ENCODE measurements at regions of chr6 and their contacts with region 1.

Region 1: DNA sequence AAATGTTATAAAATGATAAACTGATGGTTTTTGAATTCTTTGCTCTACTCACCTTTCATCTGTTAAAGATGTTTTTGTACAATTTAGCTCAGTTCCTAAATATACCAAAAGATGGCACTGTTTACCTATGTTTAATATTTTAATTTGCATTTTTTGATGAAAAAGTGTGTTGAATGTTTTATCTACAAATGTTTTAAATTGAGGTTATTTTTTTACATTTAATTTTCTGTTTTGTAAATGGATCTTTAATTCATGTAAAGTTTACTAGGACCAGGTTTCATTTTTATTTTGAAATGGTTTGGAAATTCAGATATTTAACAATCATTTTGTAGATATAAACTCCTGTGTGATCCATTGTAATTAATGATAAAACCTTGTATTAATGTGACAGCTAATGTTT is 30.0 kb downstream of the CDKAL1 start:
- DNase-seq: no peak
- H3K4me3 ChIP-seq: no peak overlapping the region
- H3K27ac ChIP-seq: no peak overlapping the region
- H3K4me1 ChIP-seq: no peaks in the 10 kb centered on the region
- H3K27me3 ChIP-seq: no peaks in the 10 kb centered on the region
- CTCF ChIP-seq: peak; percentile 40 to 83 (median 66)
- POLR2A ChIP-seq: no peak

Region 2: GRCh38 chr6:20159781-20160540 is 404.3 kb before region 1 on chr6:
- intact Hi-C with region 1: no loop called
- DNase-seq: no peak
- H3K4me3 ChIP-seq: no peak overlapping the region
- H3K27ac ChIP-seq: no peak overlapping the region
- H3K4me1 ChIP-seq: no peaks in the 10 kb centered on the region
- H3K27me3 ChIP-seq: no peaks in the 10 kb centered on the region
- CTCF ChIP-seq: no peak
- POLR2A ChIP-seq: no peak

Region 3: GRCh38 chr6:21003780-21004541 is 439.7 kb after region 1 on chr6:
- intact Hi-C with region 1: no loop called
- DNase-seq: no peak
- H3K4me3 ChIP-seq: no peak overlapping the region
- H3K27ac ChIP-seq: no peak overlapping the region
- H3K4me1 ChIP-seq: peaks cover 0 to 5% of the 10 kb centered on the region in 2 donors
- H3K27me3 ChIP-seq: no peaks in the 10 kb centered on the region
- CTCF ChIP-seq: no peak
- POLR2A ChIP-seq: no peak

Region 4: DNA sequence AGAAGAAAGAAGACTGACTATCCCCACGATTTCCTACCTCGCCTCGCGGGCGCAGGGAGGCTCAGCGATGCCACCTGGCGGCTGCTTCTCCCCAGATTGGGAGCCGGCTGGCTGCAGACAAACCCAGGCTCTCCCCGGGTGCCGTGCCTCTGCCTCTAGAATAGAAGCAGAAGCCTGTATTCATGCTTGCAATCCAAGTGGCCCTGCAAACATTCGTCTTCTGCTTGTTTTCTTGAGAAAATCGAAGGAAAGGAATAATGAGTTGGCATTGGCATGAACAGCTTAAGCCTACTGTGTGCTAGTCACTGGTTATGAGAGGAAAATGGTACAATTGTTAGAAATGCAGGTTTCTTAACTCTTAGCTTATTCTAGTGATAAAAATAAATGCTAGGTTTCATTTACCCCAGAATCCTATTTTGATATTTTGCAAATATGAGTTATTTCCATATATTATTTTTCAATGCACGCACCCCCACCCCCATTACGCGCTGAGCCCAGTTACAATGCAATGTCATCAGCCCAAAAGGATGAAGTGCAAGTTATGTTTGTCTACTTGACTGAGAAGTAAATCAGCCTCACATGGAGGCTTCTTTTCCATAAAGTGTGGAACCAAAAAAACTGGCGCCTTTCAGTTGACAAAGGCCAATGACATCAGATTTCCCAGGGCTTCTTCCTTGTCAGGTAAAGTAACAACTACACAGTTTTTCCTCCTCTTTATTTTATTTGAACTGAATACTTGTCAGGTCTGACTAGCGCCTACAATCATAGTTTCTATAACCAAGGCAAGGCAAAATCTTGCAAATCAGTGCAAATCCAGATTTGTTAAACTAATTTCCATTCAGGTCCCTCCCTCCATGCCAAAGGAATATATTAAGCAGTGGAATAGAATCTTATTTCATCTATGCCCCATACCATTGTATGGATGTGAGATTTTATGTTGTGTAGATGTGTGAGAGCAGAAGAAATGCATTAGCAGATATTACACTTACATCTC is 1025.4 kb after region 1 on chr6:
- intact Hi-C with region 1: loop called in 1 of 2 experiments (anchors 5 kb)
- DNase-seq: peak; percentile 78 to 95 (median 90)
- H3K4me3 ChIP-seq: peak overlapping the region in 2 of 4 donors; percentile 39 to 73
- H3K27ac ChIP-seq: peak overlapping the region in 3 of 5 donors; percentile 50 to 75 (median 56)
- H3K4me1 ChIP-seq: peaks cover 5 to 7% of the 10 kb centered on the region in 2 donors
- H3K27me3 ChIP-seq: no peaks in the 10 kb centered on the region
- CTCF ChIP-seq: peak; percentile 73 to 93 (median 88)
- POLR2A ChIP-seq: no peak